Activated CD4-positive, alpha-beta T cell treated with anti-CD3 and anti-CD28 coated beads, Interleukin-2, amount 10 ng/mL, durations not matched to agents 24 days and 14 days (primary cell): ENCODE measurements at regions of chr1 and their contacts with region 1.

Region 1: DNA sequence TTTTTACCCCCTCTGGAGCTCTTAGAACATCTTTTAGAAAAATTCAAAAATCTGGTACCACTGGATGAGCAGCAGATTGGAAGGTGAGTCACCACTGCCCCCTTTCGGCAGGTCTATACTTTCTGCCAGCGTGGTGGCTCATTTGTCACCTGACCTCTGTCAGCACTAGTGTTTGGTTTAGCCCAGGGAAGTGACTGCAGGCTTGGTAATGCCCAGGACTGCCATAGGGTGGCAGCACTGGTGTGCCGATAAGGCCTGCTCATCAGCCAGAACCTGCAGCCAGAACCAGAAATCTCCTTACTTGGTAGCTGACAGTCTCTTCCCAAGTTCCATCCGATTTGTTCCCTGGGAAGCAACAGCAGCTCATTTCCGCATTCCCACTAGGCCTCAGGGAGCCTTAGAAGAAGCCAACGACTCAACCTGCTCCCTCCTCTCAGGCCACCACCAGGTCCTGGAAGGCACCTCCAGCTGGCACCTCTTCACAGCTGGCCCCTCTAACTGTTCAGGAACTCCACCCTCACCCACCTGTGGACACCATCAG is 6.8 kb downstream of the SMIM12 start:
- DNase-seq: peak; percentile 97
- H3K4me3 Mint-ChIP-seq: no peak overlapping the region
- H3K27ac Mint-ChIP-seq: peak overlapping the region; percentile 3
- H3K4me1 Mint-ChIP-seq: peaks cover 11% of the 10 kb centered on the region
- H3K27me3 Mint-ChIP-seq: no peaks in the 10 kb centered on the region

Region 2: DNA sequence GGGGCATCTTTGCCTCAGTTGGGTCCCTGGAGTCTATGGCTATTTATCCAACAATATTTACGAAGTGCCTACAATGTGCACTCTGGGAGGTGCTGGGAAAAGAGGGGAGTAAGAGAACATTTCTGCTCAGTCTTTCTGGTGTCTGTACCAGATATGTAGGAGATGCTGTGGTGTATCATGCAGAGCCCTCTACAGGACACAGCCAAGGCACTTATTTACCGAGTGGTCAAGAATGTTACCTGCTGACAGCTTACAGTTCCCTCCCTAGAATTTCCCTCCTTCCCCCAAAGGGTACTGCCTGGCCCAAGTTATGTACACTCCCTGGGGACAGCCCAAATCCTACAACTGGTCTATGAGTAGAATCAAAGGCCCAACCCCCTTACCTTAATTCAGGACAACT is 498.4 kb before region 1 on chr1:
- intact Hi-C with region 1: no loop called
- DNase-seq: no peak
- H3K4me3 Mint-ChIP-seq: no peak overlapping the region
- H3K27ac Mint-ChIP-seq: no peak overlapping the region
- H3K4me1 Mint-ChIP-seq: no peaks in the 10 kb centered on the region
- H3K27me3 Mint-ChIP-seq: peaks cover 2% of the 10 kb centered on the region

Region 3: GRCh38 chr1:34786521-34787325 is 66.0 kb before region 1 on chr1:
- intact Hi-C with region 1: loop called (anchors 1 kb)
- DNase-seq: peak; percentile 88
- H3K4me3 Mint-ChIP-seq: no peak overlapping the region
- H3K27ac Mint-ChIP-seq: no peak overlapping the region
- H3K4me1 Mint-ChIP-seq: peaks cover 11% of the 10 kb centered on the region
- H3K27me3 Mint-ChIP-seq: peaks cover 17% of the 10 kb centered on the region

Region 4: DNA sequence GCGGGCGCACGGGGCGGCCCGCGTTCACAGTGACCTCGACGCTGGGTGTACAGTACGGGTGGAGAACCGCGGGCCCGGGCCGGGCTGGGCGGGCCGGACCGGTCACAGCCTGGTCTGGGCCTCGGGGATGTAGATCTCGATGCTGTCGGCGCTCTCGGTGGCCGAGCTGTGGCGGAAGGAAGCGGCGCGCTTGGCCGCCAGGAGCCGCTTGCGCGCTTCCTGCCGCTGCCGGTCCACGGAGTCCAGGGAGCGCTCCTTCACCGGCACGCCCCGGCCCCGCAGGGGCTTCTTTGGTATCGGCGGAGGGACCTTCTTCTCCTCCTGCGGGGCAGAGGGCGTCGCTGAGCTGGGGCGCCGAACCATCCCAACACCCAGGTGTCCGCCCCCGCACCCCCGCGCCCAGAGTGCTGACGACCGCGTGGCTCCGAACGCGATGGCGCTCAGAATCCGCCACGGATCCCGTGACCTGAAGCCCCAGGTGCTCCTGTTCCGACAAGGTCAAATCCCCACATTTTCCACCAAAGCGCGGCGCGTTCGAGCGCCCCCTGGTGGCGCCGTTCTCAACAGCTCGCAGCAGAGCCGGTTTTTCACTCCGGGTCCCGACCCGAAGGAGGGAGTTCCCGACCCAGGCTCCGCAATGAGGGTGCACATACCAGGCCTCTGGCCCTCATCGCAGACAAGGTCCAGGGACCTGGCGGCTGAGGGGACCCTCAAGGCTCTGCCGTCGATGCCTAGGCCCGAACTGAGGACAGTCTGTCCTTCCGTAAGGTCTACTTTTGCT is 13.4 kb after region 1 on chr1:
- intact Hi-C with region 1: loop called (anchors 1 kb)
- DNase-seq: peak; percentile 98
- H3K4me3 Mint-ChIP-seq: peak overlapping the region; percentile 82
- H3K27ac Mint-ChIP-seq: peak overlapping the region; percentile 90
- H3K4me1 Mint-ChIP-seq: peaks cover 19% of the 10 kb centered on the region
- H3K27me3 Mint-ChIP-seq: peaks cover 12% of the 10 kb centered on the region

Region 5: GRCh38 chr1:34984793-34985608 is 132.3 kb after region 1 on chr1 and contains the start of gene TMEM35B:
- intact Hi-C with region 1: loop called (anchors 10 kb)
- DNase-seq: peak; percentile 95
- H3K4me3 Mint-ChIP-seq: peak within 1 kb of the TSS; percentile 95
- H3K27ac Mint-ChIP-seq: peak within 1 kb of the TSS; percentile 92
- H3K4me1 Mint-ChIP-seq: peaks cover 32% of the 10 kb centered on the region
- H3K27me3 Mint-ChIP-seq: no peaks in the 10 kb centered on the region
- total RNA-seq, gene TMEM35B: 20.1 and 22.1 TPM in 2 replicates